Activated CD8-positive, alpha-beta T cell treated with anti-CD3 and anti-CD28 coated beads for 36 hours (primary cell): ENCODE measurements at regions of chr7 and their contacts with region 1.

Region 1: DNA sequence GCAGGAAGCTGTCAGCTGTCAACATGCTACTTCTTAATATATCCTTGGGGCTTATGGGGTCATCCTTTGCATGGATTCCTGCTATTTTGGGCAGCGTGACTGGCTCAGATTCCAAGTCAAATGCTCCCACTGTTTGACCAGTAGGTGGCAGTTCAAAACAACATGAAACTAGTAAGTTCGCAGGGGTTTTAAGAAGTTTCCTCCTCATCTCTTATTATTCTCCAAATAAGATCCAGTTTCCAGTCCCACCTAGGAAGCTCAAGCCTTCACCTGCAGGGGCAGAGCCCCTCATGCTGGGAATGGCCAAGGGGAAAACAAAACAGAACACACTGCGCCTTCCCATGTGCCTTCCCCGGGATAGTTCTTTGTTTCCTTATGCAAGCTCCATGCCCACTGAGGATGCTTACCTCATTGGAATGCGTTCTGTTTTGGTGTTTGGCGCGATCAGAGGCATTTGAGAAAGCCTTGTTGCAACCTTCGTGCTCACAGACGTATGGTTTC is 259.8 kb downstream of the GLI3 start:
- DNase-seq: peak; percentile 7
- ATAC-seq: no peak
- H3K4me3 Mint-ChIP-seq: no peak overlapping the region
- H3K27ac Mint-ChIP-seq: no peak overlapping the region
- H3K4me1 Mint-ChIP-seq: no peaks in the 10 kb centered on the region
- H3K27me3 Mint-ChIP-seq: peaks cover 9% of the 10 kb centered on the region
- CTCF ChIP-seq: peak; percentile 40

Region 2: GRCh38 chr7:41948503-41948902 is 28.7 kb before region 1 on chr7:
- CTCF ChIA-PET with region 1: interaction called, 17 read pairs
- POLR2A ChIA-PET with region 1: no interaction called
- intact Hi-C with region 1: no loop called
- DNase-seq: no peak
- ATAC-seq: no peak
- H3K4me3 Mint-ChIP-seq: no peak overlapping the region
- H3K27ac Mint-ChIP-seq: no peak overlapping the region
- H3K4me1 Mint-ChIP-seq: no peaks in the 10 kb centered on the region
- H3K27me3 Mint-ChIP-seq: peaks cover 6% of the 10 kb centered on the region
- CTCF ChIP-seq: no peak

Region 3: GRCh38 chr7:41996381-41997035 is 19.3 kb after region 1 on chr7:
- CTCF ChIA-PET with region 1: interaction called, 17 read pairs
- POLR2A ChIA-PET with region 1: no interaction called
- intact Hi-C with region 1: no loop called
- DNase-seq: no peak
- ATAC-seq: no peak
- H3K4me3 Mint-ChIP-seq: no peak overlapping the region
- H3K27ac Mint-ChIP-seq: no peak overlapping the region
- H3K4me1 Mint-ChIP-seq: no peaks in the 10 kb centered on the region
- H3K27me3 Mint-ChIP-seq: peaks cover 6% of the 10 kb centered on the region
- CTCF ChIP-seq: no peak

Region 4: GRCh38 chr7:42843205-42843800 is 866.1 kb after region 1 on chr7:
- CTCF ChIA-PET with region 1: interaction called, 3 read pairs
- POLR2A ChIA-PET with region 1: no interaction called
- intact Hi-C with region 1: loop called (anchors 10 kb)
- DNase-seq: peak; percentile 49
- ATAC-seq: peak; percentile 58
- H3K4me3 Mint-ChIP-seq: no peak overlapping the region
- H3K27ac Mint-ChIP-seq: no peak overlapping the region
- H3K4me1 Mint-ChIP-seq: no peaks in the 10 kb centered on the region
- H3K27me3 Mint-ChIP-seq: peaks cover 28% of the 10 kb centered on the region
- CTCF ChIP-seq: peak; percentile 52